GM12878 (cell line): ENCODE measurements at regions of chr18 and their contacts with region 1.

Region 1: DNA sequence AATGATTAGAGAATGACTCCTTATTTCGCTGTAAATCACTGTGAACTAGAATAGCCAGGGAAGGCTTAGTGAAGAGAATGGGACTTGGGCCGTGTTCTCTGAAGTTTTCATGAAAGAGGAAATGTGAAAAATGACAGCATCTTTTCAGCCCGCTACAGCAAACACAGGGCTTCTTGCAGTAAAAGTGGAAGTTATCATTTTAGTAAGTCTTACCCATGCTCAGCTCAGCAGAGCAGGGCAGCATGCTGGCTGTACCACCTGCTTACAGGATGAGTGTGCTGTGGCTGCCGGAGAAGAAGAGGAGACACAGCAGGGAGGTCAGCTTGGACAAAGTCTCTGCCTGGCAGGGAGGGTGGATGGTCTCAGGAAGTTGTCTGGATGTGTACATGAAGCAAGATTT is 300.7 kb upstream of the DLGAP1 start:
- DNase-seq: peak; percentile 71
- ATAC-seq: peak; percentile 92
- H3K4me3 ChIP-seq: no peak overlapping the region
- H3K27ac ChIP-seq: no peak overlapping the region
- H3K4me1 ChIP-seq: no peaks in the 10 kb centered on the region; the same call in 1 of the 2 replicates
- H3K27me3 ChIP-seq: no peaks in the 10 kb centered on the region
- CTCF ChIP-seq: no peak
- EP300 ChIP-seq: peak in 1 of 2 experiments; percentile 59; a peak in 1 of 4 replicates
- POLR2A ChIP-seq: no peak
- RAD21 ChIP-seq: no peak

Region 2: GRCh38 chr18:4524096-4524495 is 231.8 kb before region 1 on chr18:
- CTCF ChIA-PET with region 1: no interaction called
- POLR2A ChIA-PET with region 1: no interaction called
- RAD21 ChIA-PET with region 1: no interaction called
- SMC1A ChIA-PET with region 1: no interaction called
- in situ Hi-C with region 1: no loop called
- intact Hi-C with region 1: loop called (anchors 10 kb)
- DNase-seq: no peak
- ATAC-seq: no peak
- H3K4me3 ChIP-seq: no peak overlapping the region
- H3K27ac ChIP-seq: no peak overlapping the region
- H3K4me1 ChIP-seq: no peaks in the 10 kb centered on the region
- H3K27me3 ChIP-seq: no peaks in the 10 kb centered on the region
- CTCF ChIP-seq: 0 out of 6 replicates have a peak, but pooled peaks of 1 of the 3 experiments have one; percentile 3
- EP300 ChIP-seq: no peak
- POLR2A ChIP-seq: no peak
- RAD21 ChIP-seq: no peak

Region 3: DNA sequence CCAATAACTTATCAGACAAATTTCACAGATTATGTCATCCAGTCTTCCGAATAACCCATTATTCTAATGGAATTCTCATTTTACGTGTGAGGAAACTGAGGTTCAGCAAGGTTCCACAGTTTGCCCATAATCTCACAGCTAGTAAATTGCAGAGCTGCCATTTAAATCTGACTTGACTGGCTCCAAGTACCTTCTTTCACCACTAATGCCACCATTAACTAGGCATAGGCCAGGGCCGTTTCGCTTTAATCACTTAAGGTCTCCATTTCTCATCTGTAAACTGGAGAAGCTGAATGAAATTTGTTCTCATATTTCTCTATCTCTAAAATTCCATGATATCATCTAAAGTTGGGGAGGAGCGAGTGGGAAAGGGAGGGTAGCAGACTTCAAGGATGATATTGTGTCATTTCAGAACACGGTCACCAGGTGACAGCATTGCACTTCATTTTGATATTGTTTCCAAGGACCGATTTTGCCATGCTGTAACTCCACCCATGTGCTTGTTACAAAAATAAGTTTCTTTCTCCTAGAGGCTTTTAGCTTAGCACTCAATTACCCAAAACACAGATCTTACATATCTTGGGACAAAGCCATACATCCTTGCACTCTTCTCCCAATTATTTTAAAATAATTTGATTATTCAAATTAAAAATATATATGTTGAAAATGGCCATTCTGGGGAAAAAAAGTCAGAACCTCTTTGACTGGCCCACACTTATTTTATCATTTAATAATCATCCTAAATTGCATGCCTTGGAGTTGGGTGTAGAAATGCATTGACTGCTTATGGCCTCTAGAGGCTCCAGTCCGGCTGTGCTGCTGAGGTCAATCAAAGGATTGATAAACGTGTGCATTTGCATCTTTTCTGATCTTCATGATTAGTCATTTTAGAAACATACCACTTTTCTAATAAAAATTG is 317.4 kb after region 1 on chr18:
- CTCF ChIA-PET with region 1: no interaction called
- POLR2A ChIA-PET with region 1: no interaction called
- RAD21 ChIA-PET with region 1: no interaction called
- SMC1A ChIA-PET with region 1: no interaction called
- in situ Hi-C with region 1: no loop called
- intact Hi-C with region 1: no loop called
- DNase-seq: no peak
- ATAC-seq: peak; percentile 88
- H3K4me3 ChIP-seq: no peak overlapping the region
- H3K27ac ChIP-seq: no peak overlapping the region
- H3K4me1 ChIP-seq: no peaks in the 10 kb centered on the region
- H3K27me3 ChIP-seq: no peaks in the 10 kb centered on the region
- CTCF ChIP-seq: peak; percentile 52 to 90 (median 65)
- EP300 ChIP-seq: no peak
- POLR2A ChIP-seq: no peak
- RAD21 ChIP-seq: peak; percentile 81